ENCODE measurements at regions of chr17 and their contacts with region 1.

Region 1: GRCh38 chr17:79045842-79046196 is 21.9 kb downstream of the C1QTNF1 start:
- DNase-seq: peak; percentile 48
- H3K4me3 ChIP-seq: no peak overlapping the region
- H3K27ac ChIP-seq: no peak overlapping the region
- H3K4me1 ChIP-seq: no peaks in the 10 kb centered on the region
- H3K27me3 ChIP-seq: no peaks in the 10 kb centered on the region
- CTCF ChIP-seq: peak; percentile 90 to 99

Region 2: DNA sequence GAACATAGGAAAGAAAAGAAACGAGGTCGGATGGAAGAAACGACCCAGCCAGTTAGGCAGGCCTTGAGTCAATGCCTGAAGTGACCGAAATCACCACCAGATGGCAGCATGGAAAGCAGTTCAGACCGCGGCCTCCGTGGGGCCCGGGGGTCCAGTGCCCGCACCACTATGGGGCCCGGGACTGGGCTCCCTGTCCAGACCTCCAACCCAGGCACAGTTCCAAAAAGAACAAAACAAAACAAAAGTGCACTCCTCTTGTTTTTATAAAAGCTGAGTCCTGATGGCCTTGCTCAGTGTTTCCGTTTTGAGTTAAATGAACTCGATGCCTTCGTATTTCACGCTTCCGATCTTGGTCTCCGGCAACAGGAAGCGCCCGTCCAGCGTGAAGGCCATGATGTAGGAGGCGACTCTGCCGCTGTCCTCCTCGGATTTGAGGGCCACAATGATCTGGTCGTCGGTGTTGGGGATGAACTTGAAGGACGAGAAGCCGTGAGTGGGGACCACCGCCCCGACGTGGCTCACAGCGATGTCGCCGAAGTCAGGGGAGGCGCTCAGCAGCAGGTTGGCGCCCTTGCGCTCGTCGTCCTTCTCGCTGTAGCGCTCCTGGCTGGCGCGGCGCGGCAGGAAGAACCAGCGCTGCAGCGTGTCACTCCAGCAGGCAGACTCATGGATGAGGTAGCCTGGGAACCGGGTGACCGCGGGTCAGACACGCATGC is 52.4 kb before region 1 on chr17:
- CTCF ChIA-PET with region 1: no interaction called
- dilution Hi-C with region 1: no loop called
- in situ Hi-C with region 1: no loop called
- intact Hi-C with region 1: loop called (anchors 1 kb)
- DNase-seq: no peak
- H3K4me3 ChIP-seq: no peak overlapping the region
- H3K27ac ChIP-seq: no peak overlapping the region
- H3K4me1 ChIP-seq: no peaks in the 10 kb centered on the region
- H3K27me3 ChIP-seq: no peaks in the 10 kb centered on the region
- CTCF ChIP-seq: peak; percentile 73 to 80

Region 3: DNA sequence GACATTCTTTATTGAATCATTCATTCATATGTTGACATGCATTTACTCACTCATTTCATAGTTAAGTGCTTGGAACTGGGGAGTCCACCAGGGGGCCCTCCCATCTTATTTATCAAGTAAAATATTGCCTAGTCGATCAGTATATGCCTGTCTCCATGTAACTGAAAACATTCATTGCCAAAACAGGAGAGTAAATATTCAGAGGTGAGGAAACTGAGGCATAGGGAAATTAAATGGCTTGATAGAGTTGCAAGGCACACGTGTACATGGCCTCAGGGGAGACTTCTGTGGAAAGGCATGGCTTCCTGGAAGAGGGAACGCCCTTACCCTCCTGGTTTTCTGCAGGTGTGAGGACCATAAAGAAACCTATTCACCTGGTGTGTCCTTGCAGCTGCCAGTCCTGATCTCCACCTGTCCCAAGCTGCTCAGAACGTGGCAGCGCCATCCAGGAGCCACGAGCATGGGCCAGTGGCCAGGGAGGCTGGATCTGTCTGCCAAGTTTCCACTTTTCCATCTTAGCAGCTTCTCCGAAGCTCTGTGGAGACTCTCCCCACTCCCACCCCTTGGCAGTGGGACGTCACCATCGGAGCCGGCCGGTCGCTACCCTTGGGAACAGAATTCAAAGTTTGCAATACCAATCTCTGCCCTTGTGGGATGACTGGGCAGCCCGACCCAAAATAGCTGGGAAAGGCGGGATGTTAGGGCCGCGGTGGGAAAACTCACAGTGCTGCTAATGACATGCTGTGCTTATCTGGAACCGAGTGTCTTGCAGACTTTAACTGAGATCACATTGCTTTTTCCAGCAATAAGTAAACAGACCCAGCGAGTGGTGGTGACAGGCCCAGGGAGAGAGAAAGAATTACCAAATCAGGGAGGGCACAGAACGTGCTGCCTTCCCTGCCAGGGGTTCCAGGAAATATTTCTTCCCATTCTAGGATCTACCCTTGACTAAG is 25.9 kb before region 1 on chr17:
- CTCF ChIA-PET with region 1: interaction called, 3 read pairs
- dilution Hi-C with region 1: no loop called
- in situ Hi-C with region 1: no loop called
- intact Hi-C with region 1: loop called (anchors 1 kb)
- DNase-seq: peak; percentile 53
- H3K4me3 ChIP-seq: no peak overlapping the region
- H3K27ac ChIP-seq: no peak overlapping the region
- H3K4me1 ChIP-seq: peaks cover 43% of the 10 kb centered on the region
- H3K27me3 ChIP-seq: no peaks in the 10 kb centered on the region
- CTCF ChIP-seq: peak; percentile 68 to 77

Region 4: DNA sequence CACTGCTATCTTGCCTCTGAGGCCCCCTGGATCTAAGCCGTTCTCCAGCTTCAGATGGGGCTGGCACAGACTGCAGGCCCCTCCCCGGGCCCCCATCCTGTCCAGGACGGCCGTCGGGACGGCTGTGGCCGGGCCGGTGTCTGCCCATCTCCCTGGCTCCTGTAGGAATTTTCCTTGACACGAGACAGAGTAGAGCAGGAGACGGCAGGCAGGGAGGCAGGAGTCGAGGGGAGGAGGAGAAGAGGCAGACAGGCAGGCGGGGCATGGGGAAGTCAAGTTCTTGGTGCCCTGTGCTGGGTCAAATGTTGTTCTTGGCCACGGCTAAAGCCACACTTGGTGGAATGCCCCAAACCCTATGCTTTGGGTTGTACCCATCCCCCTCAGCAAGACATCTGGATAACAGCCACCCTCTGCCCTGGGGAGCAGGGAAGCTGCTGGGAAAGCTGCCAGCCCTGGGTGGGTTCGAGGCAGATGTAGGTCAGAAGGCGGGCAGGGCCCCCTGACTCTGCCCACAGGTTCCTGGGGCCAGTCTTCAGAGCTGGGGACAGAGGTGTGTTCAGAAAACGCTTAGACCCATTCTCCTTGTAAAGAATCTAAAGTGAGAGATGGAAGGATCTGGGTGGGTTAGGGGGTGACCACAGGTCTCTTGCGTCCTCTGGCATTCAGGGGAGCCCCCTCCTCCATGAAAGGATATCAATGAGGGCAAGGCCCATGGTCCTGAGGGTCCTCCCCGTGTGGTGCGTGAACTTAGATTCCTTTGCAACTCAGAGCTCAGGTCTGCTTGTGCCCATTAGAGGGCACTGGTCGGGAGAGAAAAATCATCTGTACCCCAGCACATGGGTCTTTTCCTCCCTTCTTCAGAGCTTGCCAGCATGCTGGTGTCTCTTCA is 17.6 kb before region 1 on chr17:
- CTCF ChIA-PET with region 1: interaction called, 7 read pairs
- dilution Hi-C with region 1: no loop called
- in situ Hi-C with region 1: no loop called
- intact Hi-C with region 1: loop called (anchors 2 kb)
- DNase-seq: no peak
- H3K4me3 ChIP-seq: no peak overlapping the region
- H3K27ac ChIP-seq: peak overlapping the region; percentile 46
- H3K4me1 ChIP-seq: peaks cover 47% of the 10 kb centered on the region
- H3K27me3 ChIP-seq: no peaks in the 10 kb centered on the region
- CTCF ChIP-seq: peak in 1 of 2 donors; percentile 32

Region 5: DNA sequence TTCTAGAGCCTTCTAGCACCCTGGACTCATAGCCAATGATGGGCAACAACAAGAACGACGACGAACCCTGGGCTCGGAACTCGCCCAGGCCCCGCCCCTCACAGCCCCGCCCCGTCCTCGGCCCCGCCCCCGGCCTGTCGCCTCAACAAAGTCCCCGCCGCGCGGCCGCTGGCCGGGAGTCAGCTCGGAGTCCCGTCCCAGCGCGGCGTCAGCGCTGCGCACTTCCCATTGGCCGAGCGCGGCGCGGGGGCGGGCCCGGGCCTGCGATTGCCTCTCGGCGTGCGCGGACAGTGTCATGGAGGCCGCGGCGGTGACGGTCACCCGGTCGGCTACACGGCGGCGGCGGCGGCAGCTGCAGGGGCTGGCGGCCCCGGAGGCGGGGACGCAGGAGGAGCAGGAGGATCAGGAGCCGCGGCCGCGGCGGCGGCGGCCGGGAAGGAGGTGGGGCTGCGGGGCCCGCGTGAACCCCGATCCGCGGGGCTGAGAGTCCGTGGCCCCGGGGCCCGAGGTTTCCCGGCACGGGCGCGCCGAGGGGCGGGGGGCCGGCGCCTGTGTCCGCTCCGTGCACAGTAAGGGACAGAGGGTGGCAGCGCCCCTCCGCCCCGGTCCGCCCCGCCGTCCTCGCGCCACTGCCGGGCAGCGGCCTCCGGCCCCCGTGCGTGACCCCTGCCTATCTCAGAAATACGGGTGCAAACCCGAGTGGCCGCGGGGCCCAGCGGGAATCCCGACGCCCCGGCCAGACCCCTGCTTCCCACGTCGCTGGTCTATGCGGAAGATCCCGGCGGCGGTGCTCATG is 29.0 kb after region 1 on chr17 and contains the start of gene ENGASE:
- CTCF ChIA-PET with region 1: interaction called, 3 read pairs
- dilution Hi-C with region 1: no loop called
- in situ Hi-C with region 1: no loop called
- intact Hi-C with region 1: loop called (anchors 2 kb)
- DNase-seq: peak; percentile 87
- H3K4me3 ChIP-seq: peak within 1 kb of the TSS; percentile 70 to 80 (median 73)
- H3K27ac ChIP-seq: peak within 1 kb of the TSS; percentile 36
- H3K4me1 ChIP-seq: peaks cover 4% of the 10 kb centered on the region
- H3K27me3 ChIP-seq: no peaks in the 10 kb centered on the region
- CTCF ChIP-seq: no peak
- total RNA-seq, gene ENGASE: 11.8 to 24.2 TPM

Region 6: DNA sequence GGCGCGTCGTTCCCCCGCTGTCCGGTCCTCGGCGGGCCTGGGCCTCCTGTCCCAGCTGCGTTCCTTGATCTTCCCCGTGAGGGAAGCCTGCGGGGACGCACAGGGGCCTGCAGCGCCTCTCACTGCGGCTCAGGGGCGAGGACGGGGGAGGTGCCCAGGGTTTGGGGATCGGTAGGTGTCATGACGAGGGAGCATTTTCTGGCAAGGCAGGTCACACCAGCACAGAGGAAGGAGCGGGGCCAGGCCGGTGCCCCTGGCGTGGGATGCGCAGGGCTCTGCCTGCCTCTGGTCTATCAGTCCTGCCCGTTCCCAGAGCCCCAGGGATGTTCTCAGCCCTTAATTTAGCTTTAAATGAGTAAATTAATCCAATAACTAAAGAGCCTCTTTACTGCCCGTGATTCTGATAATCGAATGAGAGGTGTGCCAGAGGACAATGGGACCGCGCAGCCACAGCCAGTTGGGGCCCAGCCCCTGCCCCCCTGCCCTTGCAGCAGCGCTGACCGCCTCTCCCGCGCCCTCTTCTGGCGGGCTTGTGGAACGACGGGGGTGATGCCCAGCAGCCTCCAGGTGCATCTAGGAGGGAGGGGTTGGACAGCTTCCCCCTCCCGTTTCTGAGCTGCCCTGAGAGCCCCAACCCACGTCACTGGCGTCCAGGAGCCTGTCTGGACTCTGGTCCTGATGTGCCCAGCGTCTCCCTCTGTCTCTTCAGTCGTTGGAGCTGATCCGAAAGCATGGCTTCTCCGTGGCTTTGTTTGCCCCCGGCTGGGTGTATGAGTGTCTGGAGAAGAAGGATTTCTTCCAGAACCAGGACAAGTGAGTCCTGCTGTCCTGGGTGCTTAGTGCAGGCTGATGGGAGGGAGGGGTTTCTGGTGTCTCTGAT is 36.7 kb after region 1 on chr17:
- CTCF ChIA-PET with region 1: interaction called, 6 read pairs
- dilution Hi-C with region 1: no loop called
- in situ Hi-C with region 1: no loop called
- intact Hi-C with region 1: loop called (anchors 1 kb)
- DNase-seq: no peak
- H3K4me3 ChIP-seq: no peak overlapping the region
- H3K27ac ChIP-seq: no peak overlapping the region
- H3K4me1 ChIP-seq: no peaks in the 10 kb centered on the region
- H3K27me3 ChIP-seq: no peaks in the 10 kb centered on the region
- CTCF ChIP-seq: peak; percentile 61 to 90

Region 7: DNA sequence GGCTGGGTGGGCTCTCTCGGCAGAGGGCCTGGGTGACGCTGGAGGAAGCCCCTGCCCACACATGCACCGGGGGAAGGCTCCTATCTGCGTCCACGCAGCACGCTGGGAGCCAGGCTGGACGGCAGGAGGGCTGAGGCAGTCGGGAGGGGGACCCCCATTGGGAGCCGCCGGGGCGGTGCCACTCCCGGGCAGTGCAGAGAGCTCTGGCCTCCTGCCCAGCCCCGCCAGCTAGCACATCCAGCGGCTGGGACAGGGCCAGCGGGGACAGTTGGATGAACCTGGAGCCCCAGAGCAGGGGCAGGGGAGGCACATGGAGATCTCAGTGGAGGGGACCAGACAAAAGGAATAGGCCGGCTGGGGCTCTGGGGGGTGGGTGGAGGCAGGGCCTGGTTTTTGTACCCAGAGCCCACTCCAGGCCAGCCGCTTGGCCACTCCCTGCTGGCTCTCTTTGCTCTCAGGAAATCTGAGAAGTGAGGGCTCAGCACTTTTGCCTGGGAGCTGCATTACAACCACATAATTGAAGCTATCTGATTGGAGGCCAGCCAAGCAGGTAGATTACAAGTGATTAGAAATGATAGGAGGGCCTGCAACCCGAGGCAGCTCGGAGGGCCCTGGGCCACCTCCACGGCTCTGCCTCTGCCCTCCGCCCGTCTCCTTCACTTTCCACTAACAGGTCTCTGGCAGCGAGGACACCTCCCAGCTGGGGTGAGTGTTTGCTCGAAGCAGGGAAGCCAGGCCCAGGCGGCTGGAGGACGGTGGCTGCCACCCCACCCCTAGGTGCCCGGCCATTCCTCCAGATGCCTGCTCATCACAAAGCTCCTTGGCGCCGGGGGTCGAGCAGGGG is 68.9 kb after region 1 on chr17:
- CTCF ChIA-PET with region 1: no interaction called
- dilution Hi-C with region 1: loop called (anchors 5 kb)
- in situ Hi-C with region 1: no loop called
- intact Hi-C with region 1: no loop called
- DNase-seq: peak; percentile 54
- H3K4me3 ChIP-seq: no peak overlapping the region
- H3K27ac ChIP-seq: no peak overlapping the region
- H3K4me1 ChIP-seq: no peaks in the 10 kb centered on the region
- H3K27me3 ChIP-seq: peaks cover 3% of the 10 kb centered on the region
- CTCF ChIP-seq: no peak

Region 8: DNA sequence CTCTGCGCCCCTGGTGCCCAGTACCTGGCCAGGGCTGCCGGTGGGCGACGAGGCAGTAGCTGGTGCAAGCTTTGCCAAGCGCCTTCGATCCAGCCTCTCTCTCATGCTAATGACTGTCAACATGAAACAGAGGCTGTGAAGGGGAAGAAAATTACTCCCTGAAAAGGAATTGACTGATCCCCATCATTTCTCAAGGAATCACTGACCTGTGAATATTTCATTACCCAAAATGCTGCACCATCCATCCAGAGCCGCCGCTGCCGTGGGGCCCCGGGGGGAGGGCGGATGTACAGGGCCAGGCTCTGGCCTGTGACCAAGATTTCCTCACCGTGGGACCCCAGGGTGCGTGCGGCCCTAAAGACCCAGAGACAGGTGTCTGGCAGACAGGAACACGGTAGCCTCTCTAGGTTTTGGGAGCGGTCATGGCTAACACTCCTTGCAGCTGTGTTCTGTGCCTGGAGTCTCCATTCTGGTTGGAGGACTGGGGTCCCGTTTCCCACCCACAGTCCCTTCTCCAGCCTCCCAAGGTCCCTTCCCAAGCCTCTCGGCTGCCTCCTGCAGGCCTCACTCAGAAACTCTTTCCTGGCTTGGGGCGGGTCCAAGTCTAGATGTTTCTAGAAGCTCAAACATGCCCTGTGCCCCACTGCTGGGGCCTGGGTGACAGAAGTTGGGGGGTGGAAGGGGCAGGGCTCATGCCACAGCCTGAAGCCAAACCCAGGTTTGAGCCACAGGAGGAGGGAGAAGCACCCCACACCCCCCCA is 102.1 kb after region 1 on chr17:
- CTCF ChIA-PET with region 1: no interaction called
- dilution Hi-C with region 1: no loop called
- in situ Hi-C with region 1: no loop called
- intact Hi-C with region 1: no loop called
- DNase-seq: no peak
- H3K4me3 ChIP-seq: no peak overlapping the region
- H3K27ac ChIP-seq: no peak overlapping the region
- H3K4me1 ChIP-seq: no peaks in the 10 kb centered on the region
- H3K27me3 ChIP-seq: peaks cover 3% of the 10 kb centered on the region
- CTCF ChIP-seq: no peak